ENCODE measurements at regions of chr16 and their contacts with region 1.

Region 1: GRCh38 chr16:51636920-51637769 is 486.1 kb upstream of the SALL1 start:
- DNase-seq: no peak
- H3K4me3 ChIP-seq: no peak overlapping the region
- H3K27ac ChIP-seq: no peak overlapping the region
- H3K4me1 ChIP-seq: no peaks in the 10 kb centered on the region
- H3K27me3 ChIP-seq: peaks cover 10% of the 10 kb centered on the region; the same call in 1 of the 2 replicates
- CTCF ChIP-seq: no peak

Region 2: GRCh38 chr16:51163894-51164566 is 473.1 kb before region 1 on chr16:
- CTCF ChIA-PET with region 1: no interaction called
- POLR2A ChIA-PET with region 1: interaction called, 10 read pairs
- intact Hi-C with region 1: no loop called
- DNase-seq: no peak
- H3K4me3 ChIP-seq: no peak overlapping the region
- H3K27ac ChIP-seq: no peak overlapping the region
- H3K4me1 ChIP-seq: no peaks in the 10 kb centered on the region
- H3K27me3 ChIP-seq: 0 out of 2 replicates have a peak, but pooled peaks cover 2% of the 10 kb centered on the region
- CTCF ChIP-seq: no peak

Region 3: DNA sequence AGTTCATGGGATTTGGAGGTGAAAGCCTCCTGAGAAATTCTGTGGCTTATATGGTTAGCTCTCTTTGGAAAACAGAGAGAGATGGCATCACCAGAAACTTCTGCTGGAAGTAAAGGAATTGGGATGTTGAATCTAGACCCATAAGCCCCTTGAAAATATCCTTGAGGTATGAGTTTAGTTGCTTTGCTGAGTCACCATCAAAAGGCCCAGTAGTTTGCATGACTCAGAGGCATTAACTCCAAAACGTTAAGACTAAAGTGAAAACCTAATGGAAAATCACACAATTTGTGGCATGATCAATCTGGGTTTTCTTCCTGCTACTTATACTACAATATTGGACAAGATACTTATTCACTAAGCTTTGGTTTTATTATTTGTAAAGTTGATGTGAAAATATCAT is 136.8 kb before region 1 on chr16:
- CTCF ChIA-PET with region 1: no interaction called
- POLR2A ChIA-PET with region 1: no interaction called
- intact Hi-C with region 1: no loop called
- DNase-seq: no peak
- H3K4me3 ChIP-seq: no peak overlapping the region
- H3K27ac ChIP-seq: no peak overlapping the region
- H3K4me1 ChIP-seq: no peaks in the 10 kb centered on the region
- H3K27me3 ChIP-seq: 0 out of 2 replicates have a peak, but pooled peaks cover 3% of the 10 kb centered on the region
- CTCF ChIP-seq: no peak

Region 4: DNA sequence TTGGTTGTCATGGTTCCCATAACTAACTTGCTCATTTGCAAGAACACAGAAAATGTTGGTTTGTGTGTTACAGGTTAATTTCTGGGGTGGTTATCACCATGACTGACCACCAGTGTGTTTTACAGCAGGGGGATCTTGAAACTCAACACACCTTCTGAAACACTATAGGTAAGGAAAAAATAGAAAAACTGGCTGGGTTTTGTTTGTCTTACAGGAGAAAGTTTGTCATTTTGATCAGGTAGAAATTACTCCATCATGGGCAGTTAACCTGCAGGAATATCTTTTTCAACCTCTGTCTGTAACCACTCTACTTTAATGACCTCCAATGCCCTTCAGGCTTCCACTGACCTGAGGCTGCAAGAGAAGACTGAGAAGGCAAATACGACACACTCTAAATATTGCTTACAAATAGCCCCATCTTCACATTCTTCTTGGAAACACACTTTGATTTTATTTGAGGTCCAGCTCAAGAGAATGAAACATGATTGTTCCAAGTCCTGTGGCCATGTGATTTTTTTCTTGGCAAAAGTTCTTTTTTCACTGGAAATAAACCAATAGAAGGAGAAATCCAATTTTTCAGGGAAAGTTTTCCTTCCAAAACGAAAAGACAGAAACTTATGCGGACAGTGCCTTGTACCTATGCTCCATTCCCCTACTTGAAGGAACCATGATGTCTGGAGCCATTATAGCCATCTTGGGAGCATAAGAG is 57.3 kb before region 1 on chr16:
- CTCF ChIA-PET with region 1: no interaction called
- POLR2A ChIA-PET with region 1: no interaction called
- intact Hi-C with region 1: no loop called
- DNase-seq: no peak
- H3K4me3 ChIP-seq: no peak overlapping the region
- H3K27ac ChIP-seq: no peak overlapping the region
- H3K4me1 ChIP-seq: no peaks in the 10 kb centered on the region
- H3K27me3 ChIP-seq: peaks cover 19% of the 10 kb centered on the region; the same call in 1 of the 2 replicates
- CTCF ChIP-seq: no peak

Region 5: DNA sequence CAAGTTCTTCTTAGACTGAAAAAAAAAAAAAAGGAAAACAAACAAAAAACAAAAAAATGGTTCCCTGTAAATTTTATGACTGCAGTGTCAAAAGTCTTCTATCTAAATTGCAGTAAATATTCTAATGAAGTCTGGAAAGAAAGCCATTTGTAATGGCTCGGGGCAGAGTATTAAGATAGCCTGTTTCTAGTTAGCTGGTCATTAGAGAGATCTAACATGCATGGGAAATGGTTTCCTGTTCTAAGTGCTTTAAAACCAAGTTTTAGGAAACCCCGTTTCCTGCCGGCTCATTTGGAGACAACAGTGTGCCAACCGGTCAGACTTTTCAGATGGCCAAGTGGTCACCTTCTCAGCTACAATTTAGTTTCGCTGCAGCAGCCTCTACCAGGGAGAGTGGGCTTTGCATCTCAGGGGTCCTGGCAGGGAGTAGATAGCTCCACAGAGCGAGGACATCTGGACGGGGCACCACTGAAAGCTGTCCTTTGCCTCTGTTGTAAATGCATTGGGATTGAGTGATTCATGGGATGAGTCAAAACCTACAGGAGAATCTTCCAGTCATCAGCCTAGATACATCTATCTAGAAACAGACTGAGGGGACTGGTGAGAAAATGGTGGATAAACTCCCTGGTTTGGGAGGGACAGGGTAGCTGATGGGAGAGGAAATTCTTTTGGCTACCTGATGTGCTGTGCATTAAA is 12.9 kb before region 1 on chr16:
- CTCF ChIA-PET with region 1: interaction called, 15 read pairs
- POLR2A ChIA-PET with region 1: no interaction called
- intact Hi-C with region 1: no loop called
- DNase-seq: no peak
- H3K4me3 ChIP-seq: no peak overlapping the region
- H3K27ac ChIP-seq: no peak overlapping the region
- H3K4me1 ChIP-seq: no peaks in the 10 kb centered on the region
- H3K27me3 ChIP-seq: no peaks in the 10 kb centered on the region
- CTCF ChIP-seq: no peak